CD8-positive, alpha-beta memory T cell (primary cell): ENCODE measurements at regions of chr5 and their contacts with region 1.

Region 1: DNA sequence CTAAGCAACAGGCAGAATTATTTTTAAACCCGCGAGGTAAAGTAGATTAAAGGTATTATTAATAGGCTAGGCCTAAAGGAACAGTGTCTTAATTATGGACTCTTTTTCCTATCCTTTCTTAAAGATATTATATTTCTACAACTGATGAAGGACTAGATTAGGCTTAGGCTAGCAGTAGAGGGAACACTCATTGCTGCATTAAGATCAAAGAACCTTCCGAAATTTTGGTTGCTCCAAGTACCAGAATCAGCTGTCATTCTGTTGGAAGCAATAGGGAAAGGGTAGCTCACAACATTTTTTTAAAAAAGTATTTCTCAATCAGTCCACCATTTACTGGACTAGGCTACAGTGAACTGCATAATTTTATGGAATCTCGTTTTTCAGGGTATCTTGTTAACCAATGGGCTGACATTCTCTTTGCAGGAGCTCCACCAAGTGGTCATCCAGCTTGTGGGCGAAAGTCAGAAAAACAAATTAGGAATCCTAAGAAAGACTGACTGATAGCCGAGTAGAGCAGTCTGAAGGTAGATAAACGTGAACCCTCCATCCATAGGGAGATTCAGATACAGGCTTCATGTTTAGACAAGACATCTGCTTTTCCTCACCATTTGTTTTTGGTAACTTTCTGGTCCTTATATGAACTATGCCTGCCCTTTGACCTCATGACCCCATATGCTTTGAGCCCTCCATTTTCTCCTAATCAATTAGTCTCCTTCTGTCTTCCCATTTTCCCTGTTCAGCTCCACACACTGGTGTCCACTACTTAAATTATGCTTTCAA is 103.6 kb upstream of the CHD1 start:
- DNase-seq: no peak
- H3K4me3 ChIP-seq: peak overlapping the region; percentile 57
- H3K4me3 Mint-ChIP-seq: peak overlapping the region; percentile 60 to 90 (median 87)
- H3K27ac ChIP-seq: peak overlapping the region; percentile 57
- H3K27ac Mint-ChIP-seq: peak overlapping the region; percentile 84 to 99 (median 97)
- H3K4me1 ChIP-seq: peaks cover 31% of the 10 kb centered on the region
- H3K4me1 Mint-ChIP-seq: peaks cover 55 to 85% (median 83%) of the 10 kb centered on the region in 3 donors
- H3K27me3 ChIP-seq: no peaks in the 10 kb centered on the region
- H3K27me3 Mint-ChIP-seq: no peaks in the 10 kb centered on the region

Region 2: GRCh38 chr5:98928873-98929696 is 103.3 kb before region 1 on chr5 and contains the start of gene CHD1:
- CTCF ChIA-PET with region 1: interaction called, 12 read pairs
- POLR2A ChIA-PET with region 1: interaction called, 23 read pairs
- DNase-seq: peak; percentile 92 to 97 (median 97)
- H3K4me3 ChIP-seq: peak within 1 kb of the TSS; percentile 96
- H3K4me3 Mint-ChIP-seq: peak within 1 kb of the TSS; percentile 95 to 99 (median 97)
- H3K27ac ChIP-seq: peak within 1 kb of the TSS; percentile 100
- H3K27ac Mint-ChIP-seq: peak within 1 kb of the TSS; percentile 100
- H3K4me1 ChIP-seq: peaks cover 63% of the 10 kb centered on the region
- H3K4me1 Mint-ChIP-seq: peaks cover 67 to 81% (median 78%) of the 10 kb centered on the region in 3 donors
- H3K27me3 ChIP-seq: no peaks in the 10 kb centered on the region
- H3K27me3 Mint-ChIP-seq: peaks cover 0 to 8% of the 10 kb centered on the region in 2 donors
- total RNA-seq, gene CHD1: 70.8 to 73.6 TPM

Region 3: GRCh38 chr5:98989727-98990126 is 42.7 kb before region 1 on chr5:
- CTCF ChIA-PET with region 1: no interaction called
- POLR2A ChIA-PET with region 1: no interaction called
- DNase-seq: no peak
- H3K4me3 ChIP-seq: no peak overlapping the region
- H3K4me3 Mint-ChIP-seq: no peak overlapping the region
- H3K27ac ChIP-seq: no peak overlapping the region
- H3K27ac Mint-ChIP-seq: peak overlapping the region in 4 of 8 donors; percentile 3 to 73 (median 20)
- H3K4me1 ChIP-seq: no peaks in the 10 kb centered on the region
- H3K4me1 Mint-ChIP-seq: peaks cover 4 to 11% (median 9%) of the 10 kb centered on the region in 3 donors
- H3K27me3 ChIP-seq: no peaks in the 10 kb centered on the region
- H3K27me3 Mint-ChIP-seq: peaks cover 3 to 4% of the 10 kb centered on the region in 2 donors

Region 4: GRCh38 chr5:99019812-99020697 is 12.4 kb before region 1 on chr5:
- CTCF ChIA-PET with region 1: no interaction called
- POLR2A ChIA-PET with region 1: no interaction called
- DNase-seq: no peak
- H3K4me3 ChIP-seq: no peak overlapping the region
- H3K4me3 Mint-ChIP-seq: no peak overlapping the region
- H3K27ac ChIP-seq: no peak overlapping the region
- H3K27ac Mint-ChIP-seq: peak overlapping the region in 3 of 8 donors; percentile 15 to 50 (median 30)
- H3K4me1 ChIP-seq: no peaks in the 10 kb centered on the region
- H3K4me1 Mint-ChIP-seq: peaks cover 0 to 7% (median 5%) of the 10 kb centered on the region in 3 donors
- H3K27me3 ChIP-seq: no peaks in the 10 kb centered on the region
- H3K27me3 Mint-ChIP-seq: peaks cover 0 to 1% of the 10 kb centered on the region in 2 donors

Region 5: GRCh38 chr5:99272576-99272975 is 240.2 kb after region 1 on chr5:
- CTCF ChIA-PET with region 1: no interaction called
- POLR2A ChIA-PET with region 1: no interaction called
- DNase-seq: no peak
- H3K4me3 ChIP-seq: no peak overlapping the region
- H3K4me3 Mint-ChIP-seq: no peak overlapping the region
- H3K27ac ChIP-seq: no peak overlapping the region
- H3K27ac Mint-ChIP-seq: no peak overlapping the region
- H3K4me1 ChIP-seq: no peaks in the 10 kb centered on the region
- H3K4me1 Mint-ChIP-seq: no peaks in the 10 kb centered on the region
- H3K27me3 ChIP-seq: no peaks in the 10 kb centered on the region
- H3K27me3 Mint-ChIP-seq: no peaks in the 10 kb centered on the region